Gastrocnemius medialis (tissue), 4 donors: ENCODE measurements at regions of chr20 and their contacts with region 1.

Region 1: GRCh38 chr20:38645980-38646858 is 44.6 kb downstream of the ARHGAP40 start:
- DNase-seq: peak; percentile 32 to 39
- ATAC-seq: peak; percentile 79 to 88
- H3K4me3 ChIP-seq: peak overlapping the region; percentile 5 to 40 (median 32)
- H3K27ac ChIP-seq: no peak overlapping the region
- H3K4me1 ChIP-seq: peaks cover 0 to 7% of the 10 kb centered on the region in 2 donors
- H3K27me3 ChIP-seq: peaks cover 13 to 21% (median 20%) of the 10 kb centered on the region in 3 donors
- CTCF ChIP-seq: peak; percentile 82 to 95 (median 88)
- POLR2A ChIP-seq: no peak

Region 2: DNA sequence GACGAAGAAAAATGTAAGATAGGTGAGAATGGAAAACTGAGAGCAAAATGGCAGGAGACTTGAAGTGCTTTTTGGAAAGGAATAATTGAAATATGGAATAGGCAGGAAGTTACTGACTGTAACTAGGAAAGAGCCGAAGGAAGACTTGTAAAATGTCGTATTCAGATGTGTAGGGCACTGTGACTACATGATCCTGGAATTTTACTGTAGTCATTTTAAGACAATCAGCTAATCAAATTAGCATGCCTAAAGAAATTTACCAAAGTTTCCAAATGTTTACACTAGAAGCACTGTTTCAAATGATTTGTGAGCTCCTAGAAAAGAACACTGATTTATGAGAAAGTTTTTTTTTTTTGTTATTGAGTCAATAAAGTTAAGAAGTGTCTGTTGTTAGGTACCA is 86.5 kb before region 1 on chr20:
- in situ Hi-C with region 1: no loop called
- intact Hi-C with region 1: no loop called
- DNase-seq: no peak
- ATAC-seq: no peak
- H3K4me3 ChIP-seq: no peak overlapping the region
- H3K27ac ChIP-seq: no peak overlapping the region
- H3K4me1 ChIP-seq: no peaks in the 10 kb centered on the region
- H3K27me3 ChIP-seq: no peaks in the 10 kb centered on the region
- CTCF ChIP-seq: no peak
- POLR2A ChIP-seq: no peak

Region 3: GRCh38 chr20:38730989-38731737 is 84.9 kb after region 1 on chr20:
- in situ Hi-C with region 1: loop called in 1 of 4 experiments (anchors 10 kb)
- intact Hi-C with region 1: loop called (anchors 5 kb)
- DNase-seq: no peak
- ATAC-seq: peak in 1 of 2 donors; percentile 30
- H3K4me3 ChIP-seq: peak overlapping the region; percentile 26 to 52 (median 34)
- H3K27ac ChIP-seq: no peak overlapping the region
- H3K4me1 ChIP-seq: peaks cover 0 to 17% of the 10 kb centered on the region in 2 donors
- H3K27me3 ChIP-seq: peaks cover 84 to 94% (median 91%) of the 10 kb centered on the region in 3 donors
- CTCF ChIP-seq: peak; percentile 38 to 93 (median 81)
- POLR2A ChIP-seq: no peak

Region 4: GRCh38 chr20:38748097-38748860 is 102.1 kb after region 1 on chr20 and contains the start of gene ACTR5:
- in situ Hi-C with region 1: loop called in 1 of 4 experiments (anchors 10 kb)
- intact Hi-C with region 1: loop called (anchors 1 kb)
- DNase-seq: peak; percentile 84 to 87
- ATAC-seq: peak; percentile 96 to 98
- H3K4me3 ChIP-seq: peak within 1 kb of the TSS; percentile 64 to 95 (median 80)
- H3K27ac ChIP-seq: peak within 1 kb of the TSS; percentile 78 to 93 (median 86)
- H3K4me1 ChIP-seq: peaks cover 4 to 11% of the 10 kb centered on the region in 2 donors
- H3K27me3 ChIP-seq: peaks cover 0 to 2% (median 0%) of the 10 kb centered on the region in 3 donors
- CTCF ChIP-seq: no peak
- POLR2A ChIP-seq: peak; percentile 35 to 46
- total RNA-seq, gene ACTR5: 6.3 to 10.0 (median 8.0) TPM

Region 5: GRCh38 chr20:38893565-38894090 is 247.4 kb after region 1 on chr20:
- in situ Hi-C with region 1: loop called in 1 of 4 experiments (anchors 25 kb)
- intact Hi-C with region 1: loop called (anchors 10 kb)
- DNase-seq: no peak
- ATAC-seq: no peak
- H3K4me3 ChIP-seq: no peak overlapping the region
- H3K27ac ChIP-seq: no peak overlapping the region
- H3K4me1 ChIP-seq: no peaks in the 10 kb centered on the region
- H3K27me3 ChIP-seq: peaks cover 0 to 7% (median 0%) of the 10 kb centered on the region in 3 donors
- CTCF ChIP-seq: peak; percentile 7 to 92 (median 59)
- POLR2A ChIP-seq: no peak